AG04450 (cell line): ENCODE measurements at regions of chr2 and their contacts with region 1.

Region 1: GRCh38 chr2:216519154-216519762 is 20.6 kb downstream of the RPL37A start:
- DNase-seq: peak; percentile 75
- H3K4me3 ChIP-seq: no peak overlapping the region
- H3K27ac ChIP-seq: no peak overlapping the region
- H3K27me3 ChIP-seq: no peaks in the 10 kb centered on the region
- CTCF ChIP-seq: peak; percentile 76

Region 2: GRCh38 chr2:215994901-215995300 is 524.4 kb before region 1 on chr2:
- CTCF ChIA-PET with region 1: no interaction called
- POLR2A ChIA-PET with region 1: no interaction called
- DNase-seq: no peak
- H3K4me3 ChIP-seq: no peak overlapping the region
- H3K27ac ChIP-seq: no peak overlapping the region
- H3K27me3 ChIP-seq: no peaks in the 10 kb centered on the region
- CTCF ChIP-seq: no peak

Region 3: DNA sequence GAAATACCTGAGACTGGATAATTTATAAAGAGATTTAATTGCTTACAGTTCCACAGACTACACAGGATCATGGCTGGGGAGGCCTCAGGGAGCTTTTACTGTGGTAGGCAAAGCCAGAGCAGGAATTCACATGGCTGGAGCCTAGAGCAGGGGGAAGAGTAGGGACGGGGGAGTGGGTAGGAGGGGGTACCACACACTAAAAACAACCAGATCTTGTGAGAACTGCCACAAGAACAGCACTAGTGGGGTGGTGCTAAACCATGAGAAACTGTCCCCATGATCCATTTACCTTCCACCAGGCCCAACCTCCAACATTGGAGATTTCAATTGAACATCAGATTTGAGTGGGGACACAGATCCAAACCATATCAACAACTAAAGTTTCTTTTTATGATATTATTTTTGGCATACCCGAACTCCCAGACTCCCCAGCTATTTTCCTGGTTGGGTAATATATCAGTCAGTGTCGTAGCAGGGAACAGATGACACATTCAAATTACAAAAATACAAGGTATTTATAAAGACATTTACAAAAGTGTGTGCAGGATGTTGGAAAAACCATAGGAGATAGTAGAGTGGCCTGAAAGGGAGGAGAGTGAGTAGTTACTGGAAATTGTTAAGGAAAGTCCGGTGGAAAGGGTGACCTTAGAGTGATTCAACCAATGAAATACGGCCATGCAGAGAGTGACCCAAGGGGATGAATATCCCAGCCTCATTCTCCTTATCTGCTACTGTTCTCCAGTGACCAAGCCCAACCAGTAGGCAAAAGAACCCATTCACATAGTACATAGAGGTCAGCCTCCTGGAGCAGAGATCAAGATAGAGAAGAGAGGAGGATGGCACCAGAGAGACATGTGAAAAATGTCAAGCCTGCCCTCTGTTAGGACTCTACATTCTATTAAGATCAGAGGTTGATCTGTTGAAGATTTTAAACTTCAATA is 11.8 kb before region 1 on chr2:
- CTCF ChIA-PET with region 1: interaction called, 16 read pairs
- POLR2A ChIA-PET with region 1: interaction called, 5 read pairs
- DNase-seq: no peak
- H3K4me3 ChIP-seq: no peak overlapping the region
- H3K27ac ChIP-seq: no peak overlapping the region
- H3K27me3 ChIP-seq: no peaks in the 10 kb centered on the region
- CTCF ChIP-seq: no peak

Region 4: GRCh38 chr2:216533609-216534008 is 14.4 kb after region 1 on chr2:
- CTCF ChIA-PET with region 1: interaction called, 26 read pairs
- POLR2A ChIA-PET with region 1: no interaction called
- DNase-seq: no peak
- H3K4me3 ChIP-seq: no peak overlapping the region
- H3K27ac ChIP-seq: peak overlapping the region; percentile 24
- H3K27me3 ChIP-seq: no peaks in the 10 kb centered on the region
- CTCF ChIP-seq: no peak

Region 5: GRCh38 chr2:216619411-216620393 is 100.4 kb after region 1 on chr2:
- CTCF ChIA-PET with region 1: interaction called, 14 read pairs
- POLR2A ChIA-PET with region 1: no interaction called
- DNase-seq: no peak
- H3K4me3 ChIP-seq: no peak overlapping the region
- H3K27ac ChIP-seq: peak overlapping the region; percentile 21
- H3K27me3 ChIP-seq: peaks cover 3% of the 10 kb centered on the region
- CTCF ChIP-seq: no peak

Region 6: DNA sequence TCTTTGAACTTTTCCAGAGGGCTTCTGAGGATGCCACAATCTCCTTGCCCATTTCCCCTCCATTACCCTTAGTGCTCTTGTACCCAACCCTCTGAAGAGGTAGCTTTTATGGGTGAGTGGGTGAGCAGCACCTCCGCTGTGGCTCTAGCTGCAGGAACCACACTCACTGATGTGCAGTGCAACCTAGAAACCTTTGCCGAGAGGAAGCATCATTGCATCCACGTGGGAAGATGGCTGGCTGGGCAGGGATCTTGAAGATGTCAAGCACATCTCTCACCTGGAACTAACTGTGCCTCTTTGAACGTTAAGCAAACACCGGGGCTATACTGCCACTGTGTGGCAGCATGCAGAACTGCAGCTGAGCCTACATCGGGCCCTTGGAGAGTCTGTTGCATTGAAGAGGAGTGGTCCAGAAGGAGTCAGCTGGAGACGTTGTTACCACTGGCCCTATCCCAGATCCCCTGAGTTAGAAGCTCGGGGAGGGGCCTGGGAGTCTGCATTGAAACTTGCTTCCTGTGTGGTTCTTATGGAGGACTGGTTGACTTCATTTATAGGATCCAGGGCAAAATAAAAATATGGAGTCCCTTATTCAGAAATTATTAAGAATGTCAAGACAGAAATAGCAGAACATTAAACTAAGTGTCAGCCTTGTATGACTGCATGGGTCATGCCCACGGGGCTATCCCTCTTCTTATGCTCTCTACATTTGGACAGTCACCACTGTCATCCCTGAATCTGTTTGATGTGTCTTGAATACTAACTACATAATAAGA is 147.4 kb after region 1 on chr2:
- CTCF ChIA-PET with region 1: interaction called, 594 read pairs
- POLR2A ChIA-PET with region 1: interaction called, 5 read pairs
- DNase-seq: no peak
- H3K4me3 ChIP-seq: no peak overlapping the region
- H3K27ac ChIP-seq: no peak overlapping the region
- H3K27me3 ChIP-seq: no peaks in the 10 kb centered on the region
- CTCF ChIP-seq: peak; percentile 99